ENCODE measurements at regions of chr17 and their contacts with region 1.

Region 1: GRCh38 chr17:56499799-56500388 is 93.6 kb upstream of the NOG start:
- DNase-seq: peak; percentile 57
- H3K4me3 ChIP-seq: no peak overlapping the region
- H3K27ac ChIP-seq: no peak overlapping the region
- H3K4me1 ChIP-seq: no peaks in the 10 kb centered on the region
- H3K27me3 ChIP-seq: no peaks in the 10 kb centered on the region
- CTCF ChIP-seq: peak; percentile 64

Region 2: GRCh38 chr17:56436141-56436540 is 63.8 kb before region 1 on chr17:
- CTCF ChIA-PET with region 1: interaction called, 11 read pairs
- POLR2A ChIA-PET with region 1: no interaction called
- intact Hi-C with region 1: no loop called
- DNase-seq: no peak
- H3K4me3 ChIP-seq: no peak overlapping the region
- H3K27ac ChIP-seq: no peak overlapping the region
- H3K4me1 ChIP-seq: no peaks in the 10 kb centered on the region
- H3K27me3 ChIP-seq: peaks cover 18% of the 10 kb centered on the region
- CTCF ChIP-seq: no peak

Region 3: GRCh38 chr17:56679115-56679766 is 179.3 kb after region 1 on chr17:
- CTCF ChIA-PET with region 1: interaction called, 6 read pairs
- POLR2A ChIA-PET with region 1: no interaction called
- intact Hi-C with region 1: loop called (anchors 5 kb)
- DNase-seq: peak; percentile 56
- H3K4me3 ChIP-seq: peak overlapping the region; percentile 36
- H3K27ac ChIP-seq: no peak overlapping the region
- H3K4me1 ChIP-seq: peaks cover 6% of the 10 kb centered on the region
- H3K27me3 ChIP-seq: peaks cover 79% of the 10 kb centered on the region
- CTCF ChIP-seq: peak; percentile 81

Region 4: GRCh38 chr17:56715613-56716357 is 215.9 kb after region 1 on chr17:
- CTCF ChIA-PET with region 1: interaction called, 28 read pairs
- POLR2A ChIA-PET with region 1: no interaction called
- intact Hi-C with region 1: loop called (anchors 1 kb)
- DNase-seq: peak; percentile 84
- H3K4me3 ChIP-seq: no peak overlapping the region
- H3K27ac ChIP-seq: no peak overlapping the region
- H3K4me1 ChIP-seq: no peaks in the 10 kb centered on the region
- H3K27me3 ChIP-seq: no peaks in the 10 kb centered on the region
- CTCF ChIP-seq: peak; percentile 87